ENCODE measurements at regions of chr12 and their contacts with region 1.

Region 1: DNA sequence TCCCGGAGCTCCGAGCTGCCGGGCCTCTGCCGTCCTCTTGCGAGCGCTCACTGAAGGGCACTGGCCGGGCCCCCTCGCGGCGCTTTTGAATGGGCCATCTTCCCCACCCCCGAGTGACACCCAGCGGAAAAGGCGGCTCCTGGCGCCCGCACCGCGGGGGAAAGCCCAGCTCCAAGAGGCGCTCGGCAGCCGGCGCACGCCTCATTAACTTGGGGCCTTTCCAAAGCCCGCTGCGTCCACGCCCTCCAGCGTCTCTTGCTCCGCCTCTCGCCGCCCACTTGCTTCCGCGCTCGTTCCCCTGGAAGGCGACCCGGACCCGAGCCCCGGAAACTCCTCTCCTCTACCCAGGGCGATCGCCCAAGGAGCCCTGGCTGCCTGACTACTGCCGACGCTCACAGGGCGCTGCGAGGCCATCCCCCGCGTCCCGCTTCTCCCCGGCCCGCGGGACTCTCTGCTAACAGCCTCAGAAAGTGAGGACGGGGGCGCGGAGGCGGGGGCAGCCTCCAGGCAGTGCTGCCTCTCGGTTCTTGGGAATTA is at the start of gene PHLDA1:
- DNase-seq: peak; percentile 96
- ATAC-seq: peak; percentile 90 to 97 (median 94)
- H3K4me3 ChIP-seq: peak within 1 kb of the TSS; percentile 63 to 91 (median 80)
- H3K27ac ChIP-seq: peak within 1 kb of the TSS; percentile 90 to 99 (median 96)
- H3K4me1 ChIP-seq: peaks cover 0 to 48% (median 21%) of the 10 kb centered on the region in 9 donors
- H3K27me3 ChIP-seq: peaks cover 0 to 21% (median 0%) of the 10 kb centered on the region in 7 donors
- CTCF ChIP-seq: peak; percentile 26 to 82 (median 64)
- total RNA-seq, gene PHLDA1: 1.5 to 43.5 (median 23.3) TPM

Region 2: DNA sequence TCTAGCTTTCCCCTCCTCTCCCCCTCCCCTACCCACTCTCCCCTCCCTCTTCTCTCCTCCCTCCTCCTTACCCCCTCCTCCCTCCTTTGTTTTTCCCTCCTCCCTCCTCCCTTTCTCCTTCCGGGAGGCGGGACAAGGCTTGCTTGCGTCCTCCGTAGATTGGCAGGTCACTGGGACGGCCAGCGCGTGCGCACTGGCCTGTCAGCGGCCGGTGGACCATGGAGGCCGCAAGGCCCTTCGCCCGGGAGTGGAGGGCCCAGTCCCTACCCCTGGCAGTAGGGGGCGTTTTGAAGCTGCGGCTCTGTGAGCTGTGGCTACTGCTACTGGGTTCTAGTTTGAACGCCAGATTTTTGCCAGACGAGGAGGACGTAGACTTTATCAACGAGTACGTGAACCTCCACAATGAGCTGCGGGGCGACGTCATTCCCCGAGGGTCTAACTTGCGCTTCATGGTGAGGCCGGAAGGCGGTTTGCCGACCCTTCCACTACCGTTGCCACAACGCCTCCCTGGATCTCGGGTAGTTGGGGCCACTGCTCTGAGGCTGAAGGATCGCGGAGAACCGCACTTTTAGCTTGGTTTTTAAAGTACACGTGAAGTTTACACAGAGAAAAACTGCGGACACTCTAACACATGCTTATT is 640.6 kb before region 1 on chr12 and contains the start of gene GLIPR1L2:
- intact Hi-C with region 1: loop called in 1 of 10 experiments (anchors 10 kb)
- DNase-seq: peak; percentile 95 to 96
- ATAC-seq: peak; percentile 99 to 100 (median 100)
- H3K4me3 ChIP-seq: peak within 1 kb of the TSS; percentile 25 to 70 (median 60)
- H3K27ac ChIP-seq: peak within 1 kb of the TSS; percentile 66 to 96 (median 89)
- H3K4me1 ChIP-seq: peaks cover 0 to 33% (median 24%) of the 10 kb centered on the region in 9 donors
- H3K27me3 ChIP-seq: no peaks in the 10 kb centered on the region
- CTCF ChIP-seq: peak; percentile 75 to 93 (median 82)
- total RNA-seq, gene GLIPR1L2: 0.66 to 2.9 (median 1.5) TPM

Region 3: DNA sequence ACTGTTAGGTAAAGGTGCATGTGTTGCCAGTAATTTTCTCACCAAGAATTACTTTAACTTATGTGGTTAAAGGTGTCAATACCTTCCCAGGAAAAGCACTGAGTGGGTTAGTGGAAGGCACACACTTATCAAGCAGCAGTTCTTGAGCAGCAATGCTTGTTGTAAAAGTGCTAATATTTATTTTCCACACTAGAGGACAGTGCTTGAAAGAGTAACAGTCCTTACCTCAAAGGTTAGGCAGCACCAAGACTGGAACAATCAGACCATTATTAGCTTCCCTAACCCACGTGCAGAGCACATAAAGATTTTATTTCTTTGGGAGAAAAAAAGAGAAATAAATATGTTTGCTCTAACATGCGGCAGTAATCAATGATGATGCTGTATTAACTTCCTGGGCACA is 471.4 kb before region 1 on chr12:
- intact Hi-C with region 1: loop called in 6 of 10 experiments (anchors 2 to 10 kb)
- DNase-seq: no peak
- ATAC-seq: peak; percentile 67 to 86 (median 84)
- H3K4me3 ChIP-seq: no peak overlapping the region
- H3K27ac ChIP-seq: no peak overlapping the region
- H3K4me1 ChIP-seq: peaks cover 0 to 22% (median 9%) of the 10 kb centered on the region in 9 donors
- H3K27me3 ChIP-seq: no peaks in the 10 kb centered on the region
- CTCF ChIP-seq: peak in 8 of 9 donors; percentile 28 to 71 (median 50)

Region 4: DNA sequence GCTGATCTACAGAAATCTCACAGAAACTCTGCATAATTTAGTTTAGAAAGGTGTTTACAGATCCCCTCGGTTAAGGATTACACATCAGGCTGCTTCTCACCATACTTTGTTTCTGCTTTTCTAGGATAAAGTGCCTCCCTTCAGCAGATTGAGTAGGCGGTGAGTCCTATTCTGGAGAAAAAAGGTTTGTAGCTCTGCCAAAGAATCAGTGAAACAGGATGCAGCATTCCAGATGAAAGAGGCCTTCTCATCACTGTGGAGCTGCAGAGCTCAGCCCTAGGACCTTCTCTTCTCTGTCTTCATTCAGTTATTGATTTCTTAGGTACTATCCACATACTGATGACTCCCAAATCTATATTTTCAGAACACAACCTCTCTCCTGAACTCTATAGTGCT is 364.7 kb before region 1 on chr12:
- intact Hi-C with region 1: no loop called
- DNase-seq: no peak
- ATAC-seq: peak in 4 of 8 donors; percentile 27 to 77 (median 46)
- H3K4me3 ChIP-seq: no peak overlapping the region
- H3K27ac ChIP-seq: peak overlapping the region in 1 of 10 donors; percentile 23
- H3K4me1 ChIP-seq: peaks cover 0 to 13% (median 3%) of the 10 kb centered on the region in 9 donors
- H3K27me3 ChIP-seq: no peaks in the 10 kb centered on the region
- CTCF ChIP-seq: no peak

Region 5: GRCh38 chr12:75722714-75723200 is 308.8 kb before region 1 on chr12:
- intact Hi-C with region 1: loop called in 8 of 10 experiments (anchors 5 to 10 kb)
- DNase-seq: peak in 1 of 2 donors; percentile 82
- ATAC-seq: peak in 7 of 8 donors; percentile 72 to 89 (median 87)
- H3K4me3 ChIP-seq: no peak overlapping the region
- H3K27ac ChIP-seq: peak overlapping the region; percentile 31 to 89 (median 74)
- H3K4me1 ChIP-seq: peaks cover 13 to 61% (median 47%) of the 10 kb centered on the region in 9 donors
- H3K27me3 ChIP-seq: no peaks in the 10 kb centered on the region
- CTCF ChIP-seq: no peak

Region 6: GRCh38 chr12:75933101-75933500 is 98.5 kb before region 1 on chr12:
- intact Hi-C with region 1: loop called in 5 of 10 experiments (anchors 5 to 10 kb)
- DNase-seq: no peak
- ATAC-seq: peak in 1 of 8 donors; percentile 43
- H3K4me3 ChIP-seq: no peak overlapping the region
- H3K27ac ChIP-seq: peak overlapping the region in 3 of 10 donors; percentile 1 to 15 (median 4)
- H3K4me1 ChIP-seq: peaks cover 0 to 35% (median 25%) of the 10 kb centered on the region in 9 donors
- H3K27me3 ChIP-seq: peaks cover 0 to 28% (median 0%) of the 10 kb centered on the region in 7 donors
- CTCF ChIP-seq: no peak

Region 7: GRCh38 chr12:76064904-76065303 is 33.3 kb after region 1 on chr12:
- intact Hi-C with region 1: no loop called
- DNase-seq: no peak
- ATAC-seq: no peak
- H3K4me3 ChIP-seq: no peak overlapping the region
- H3K27ac ChIP-seq: no peak overlapping the region
- H3K4me1 ChIP-seq: peaks cover 0 to 5% (median 1%) of the 10 kb centered on the region in 9 donors
- H3K27me3 ChIP-seq: no peaks in the 10 kb centered on the region
- CTCF ChIP-seq: no peak

Region 8: DNA sequence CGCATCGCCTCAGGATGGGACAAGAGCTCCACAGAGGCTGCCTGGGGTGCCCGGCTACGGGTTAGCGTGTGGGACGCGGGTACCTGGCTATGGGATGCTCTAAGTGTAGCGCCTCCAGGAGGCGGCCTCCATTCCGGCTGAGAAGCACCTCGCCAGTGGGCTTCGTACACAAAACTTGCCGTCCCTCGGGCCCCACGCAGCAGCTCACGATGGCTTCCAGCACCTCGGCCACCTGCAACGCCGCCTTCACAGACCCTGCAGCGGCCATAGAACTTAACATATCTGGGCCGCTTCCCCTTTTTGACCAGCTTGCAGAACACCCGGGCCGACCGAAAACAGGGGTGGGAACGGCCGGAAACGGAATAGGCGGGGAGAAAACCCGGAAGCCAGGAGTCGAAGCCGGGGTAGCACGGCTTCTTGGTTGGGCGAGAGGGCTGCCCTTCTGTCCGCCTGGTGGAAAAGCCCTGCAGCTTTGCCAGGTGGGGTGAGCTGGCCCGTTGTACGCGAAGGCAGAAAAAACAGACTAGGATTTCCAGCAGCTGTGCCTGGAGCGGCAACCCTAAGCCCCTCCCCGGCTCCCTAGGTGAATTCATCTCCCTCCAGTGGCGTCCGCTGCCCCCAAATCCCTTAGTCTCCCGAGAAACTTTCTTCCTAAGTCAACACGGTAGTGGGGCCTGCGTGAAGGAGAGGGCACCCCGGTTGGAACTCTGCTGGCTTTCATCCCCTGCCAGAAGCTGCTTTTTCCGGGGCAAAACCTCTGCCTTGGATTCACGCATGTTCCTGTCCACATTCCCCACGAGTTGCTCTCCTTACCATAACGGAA is 316.7 kb after region 1 on chr12 and contains the start of gene BBS10:
- intact Hi-C with region 1: loop called in 1 of 10 experiments (anchors 10 kb)
- DNase-seq: peak; percentile 90 to 94
- ATAC-seq: peak; percentile 97 to 99 (median 98)
- H3K4me3 ChIP-seq: peak within 1 kb of the TSS; percentile 48 to 96 (median 80)
- H3K27ac ChIP-seq: peak within 1 kb of the TSS; percentile 55 to 93 (median 89)
- H3K4me1 ChIP-seq: peaks cover 0 to 40% (median 30%) of the 10 kb centered on the region in 9 donors
- H3K27me3 ChIP-seq: no peaks in the 10 kb centered on the region
- CTCF ChIP-seq: peak in 6 of 9 donors; percentile 29 to 64 (median 47)
- total RNA-seq, gene BBS10: 5.6 to 11.0 (median 9.0) TPM

Measured in heart right ventricle (tissue), 16 donors.